ENCODE measurements at regions of chr17 and their contacts with region 1.

Region 1: GRCh38 chr17:70144260-70144846 is 25.0 kb upstream of the KCNJ2 start:
- DNase-seq: peak; percentile 56
- ATAC-seq: no peak; the same call in 1 of the 2 replicates
- H3K4me3 ChIP-seq: no peak overlapping the region
- H3K27ac ChIP-seq: no peak overlapping the region
- H3K4me1 ChIP-seq: peaks cover 7% of the 10 kb centered on the region
- H3K27me3 ChIP-seq: no peaks in the 10 kb centered on the region
- CTCF ChIP-seq: peak; percentile 91

Region 2: DNA sequence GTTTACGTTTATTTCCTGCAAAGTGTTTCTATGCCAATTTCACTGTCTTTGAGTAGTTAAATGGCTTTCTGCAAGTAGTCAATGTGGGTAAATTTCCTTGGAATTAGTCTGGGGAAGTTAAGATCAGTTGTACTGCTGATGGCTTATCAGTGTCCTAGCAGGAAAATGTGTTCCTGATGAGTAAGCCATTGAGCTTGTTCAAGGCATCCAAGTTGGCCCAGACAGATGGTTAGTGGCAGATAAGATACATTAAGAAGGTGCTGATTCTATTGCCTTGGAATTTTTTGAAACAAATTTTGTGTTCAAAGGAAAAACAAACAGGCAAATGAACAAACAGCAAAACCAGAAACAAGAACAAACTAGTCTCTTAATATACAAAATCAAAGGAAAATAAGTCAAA is 471.4 kb before region 1 on chr17:
- CTCF ChIA-PET with region 1: no interaction called
- POLR2A ChIA-PET with region 1: no interaction called
- intact Hi-C with region 1: loop called (anchors 1 kb)
- DNase-seq: peak; percentile 46
- ATAC-seq: peak; percentile 31
- H3K4me3 ChIP-seq: no peak overlapping the region
- H3K27ac ChIP-seq: no peak overlapping the region
- H3K4me1 ChIP-seq: peaks cover 7% of the 10 kb centered on the region
- H3K27me3 ChIP-seq: no peaks in the 10 kb centered on the region
- CTCF ChIP-seq: no peak

Region 3: DNA sequence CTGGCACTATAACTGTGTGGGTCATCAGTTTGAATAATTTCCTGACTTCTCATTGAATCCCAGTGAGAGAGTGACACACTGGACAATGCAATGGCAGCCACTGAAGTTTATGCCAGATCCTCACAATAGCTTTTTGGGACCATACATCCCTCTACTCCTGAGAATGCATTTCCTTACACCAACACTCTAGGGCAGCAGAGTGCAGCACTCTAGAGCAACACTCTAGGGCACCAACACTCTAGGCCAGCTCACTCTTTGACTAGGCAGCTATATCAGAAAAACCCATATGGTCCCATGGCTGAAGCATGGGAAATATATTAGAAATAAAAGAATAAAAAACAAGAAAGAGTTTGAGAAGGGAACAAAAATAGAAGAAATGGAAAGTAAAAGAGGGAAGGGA is 420.6 kb before region 1 on chr17:
- CTCF ChIA-PET with region 1: interaction called, 5 read pairs
- POLR2A ChIA-PET with region 1: no interaction called
- intact Hi-C with region 1: loop called (anchors 2 kb)
- DNase-seq: peak; percentile 50
- ATAC-seq: peak; percentile 72
- H3K4me3 ChIP-seq: no peak overlapping the region
- H3K27ac ChIP-seq: no peak overlapping the region
- H3K4me1 ChIP-seq: no peaks in the 10 kb centered on the region
- H3K27me3 ChIP-seq: no peaks in the 10 kb centered on the region
- CTCF ChIP-seq: peak; percentile 60

Region 4: GRCh38 chr17:69812240-69812837 is 332.0 kb before region 1 on chr17:
- CTCF ChIA-PET with region 1: no interaction called
- POLR2A ChIA-PET with region 1: no interaction called
- intact Hi-C with region 1: loop called (anchors 5 kb)
- DNase-seq: peak; percentile 92
- ATAC-seq: peak; percentile 86
- H3K4me3 ChIP-seq: no peak overlapping the region
- H3K27ac ChIP-seq: peak overlapping the region; percentile 45
- H3K4me1 ChIP-seq: peaks cover 36% of the 10 kb centered on the region
- H3K27me3 ChIP-seq: no peaks in the 10 kb centered on the region
- CTCF ChIP-seq: no peak

Region 5: DNA sequence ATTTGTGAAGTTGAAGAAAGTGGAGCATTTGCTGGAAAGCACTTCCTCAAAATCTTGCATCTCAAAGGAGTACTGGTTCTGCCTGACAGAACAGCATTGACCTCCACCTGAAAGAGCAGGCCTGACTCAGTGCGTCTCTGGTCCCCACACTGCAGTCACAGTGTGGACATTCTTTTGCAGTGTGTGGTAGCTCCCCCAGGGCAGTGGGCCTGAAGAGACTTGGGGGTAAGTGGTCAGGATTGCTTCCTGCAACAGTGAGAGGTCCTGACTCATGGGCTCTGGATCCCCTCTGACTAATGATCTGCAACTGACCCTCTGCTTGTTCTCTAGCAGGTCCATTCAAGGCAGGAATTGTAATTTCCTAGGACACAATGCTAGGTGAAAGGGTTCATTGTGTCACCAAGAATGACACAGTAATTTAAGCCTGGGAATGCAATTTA is 274.2 kb before region 1 on chr17:
- CTCF ChIA-PET with region 1: no interaction called
- POLR2A ChIA-PET with region 1: no interaction called
- intact Hi-C with region 1: loop called (anchors 5 kb)
- DNase-seq: peak; percentile 95
- ATAC-seq: peak; percentile 69
- H3K4me3 ChIP-seq: no peak overlapping the region
- H3K27ac ChIP-seq: peak overlapping the region; percentile 66
- H3K4me1 ChIP-seq: peaks cover 40% of the 10 kb centered on the region
- H3K27me3 ChIP-seq: no peaks in the 10 kb centered on the region
- CTCF ChIP-seq: no peak

Region 6: GRCh38 chr17:70119983-70120382 is 24.4 kb before region 1 on chr17:
- CTCF ChIA-PET with region 1: no interaction called
- POLR2A ChIA-PET with region 1: no interaction called
- intact Hi-C with region 1: no loop called
- DNase-seq: no peak
- ATAC-seq: no peak
- H3K4me3 ChIP-seq: no peak overlapping the region
- H3K27ac ChIP-seq: no peak overlapping the region
- H3K4me1 ChIP-seq: 0 out of 2 replicates have a peak, but pooled peaks cover 5% of the 10 kb centered on the region
- H3K27me3 ChIP-seq: no peaks in the 10 kb centered on the region
- CTCF ChIP-seq: no peak